ENCODE measurements at regions of chrX and their contacts with region 1.

Region 1: DNA sequence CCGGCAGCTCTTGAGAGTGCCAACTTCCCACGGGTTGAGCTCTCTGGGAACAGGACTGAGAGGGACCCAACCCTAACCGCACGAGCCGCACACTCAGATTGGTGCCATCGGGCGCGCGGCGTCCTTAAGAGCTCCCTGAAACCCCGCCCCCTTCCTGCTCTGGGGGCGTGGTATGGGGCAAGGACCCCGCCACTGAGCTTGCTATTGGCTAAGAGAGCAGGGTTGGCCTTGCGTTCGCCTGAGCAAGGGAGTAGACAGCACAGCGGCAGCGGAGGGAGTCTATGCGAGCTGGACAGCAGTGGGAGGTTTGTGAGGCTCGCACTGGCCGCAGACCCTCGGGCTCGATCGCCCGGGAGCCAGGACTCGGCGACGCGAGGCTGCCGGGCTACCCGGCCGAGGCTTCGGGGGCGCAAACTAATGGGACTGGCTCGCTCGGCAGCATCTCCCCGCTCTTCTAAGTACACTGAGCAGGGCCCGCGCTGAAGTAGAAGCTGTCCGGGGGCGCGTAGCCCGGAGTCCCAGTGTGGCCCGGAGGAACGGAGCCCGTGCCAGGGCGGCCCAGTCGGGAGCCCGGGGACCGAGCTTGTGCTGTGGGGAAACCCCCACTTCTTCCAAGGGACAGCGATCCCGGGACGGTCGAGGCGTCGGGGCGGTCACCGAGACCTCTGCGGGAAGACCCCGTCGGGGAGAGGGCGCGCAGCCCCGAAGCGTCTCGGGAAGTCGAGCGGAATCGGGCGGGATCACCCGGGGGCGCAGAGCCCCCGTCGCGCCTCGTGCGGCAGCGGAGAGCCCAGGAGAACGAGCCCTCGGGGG is at the start of gene EFNB1:
- DNase-seq: peak; percentile 86
- CTCF ChIP-seq: no peak

Region 2: DNA sequence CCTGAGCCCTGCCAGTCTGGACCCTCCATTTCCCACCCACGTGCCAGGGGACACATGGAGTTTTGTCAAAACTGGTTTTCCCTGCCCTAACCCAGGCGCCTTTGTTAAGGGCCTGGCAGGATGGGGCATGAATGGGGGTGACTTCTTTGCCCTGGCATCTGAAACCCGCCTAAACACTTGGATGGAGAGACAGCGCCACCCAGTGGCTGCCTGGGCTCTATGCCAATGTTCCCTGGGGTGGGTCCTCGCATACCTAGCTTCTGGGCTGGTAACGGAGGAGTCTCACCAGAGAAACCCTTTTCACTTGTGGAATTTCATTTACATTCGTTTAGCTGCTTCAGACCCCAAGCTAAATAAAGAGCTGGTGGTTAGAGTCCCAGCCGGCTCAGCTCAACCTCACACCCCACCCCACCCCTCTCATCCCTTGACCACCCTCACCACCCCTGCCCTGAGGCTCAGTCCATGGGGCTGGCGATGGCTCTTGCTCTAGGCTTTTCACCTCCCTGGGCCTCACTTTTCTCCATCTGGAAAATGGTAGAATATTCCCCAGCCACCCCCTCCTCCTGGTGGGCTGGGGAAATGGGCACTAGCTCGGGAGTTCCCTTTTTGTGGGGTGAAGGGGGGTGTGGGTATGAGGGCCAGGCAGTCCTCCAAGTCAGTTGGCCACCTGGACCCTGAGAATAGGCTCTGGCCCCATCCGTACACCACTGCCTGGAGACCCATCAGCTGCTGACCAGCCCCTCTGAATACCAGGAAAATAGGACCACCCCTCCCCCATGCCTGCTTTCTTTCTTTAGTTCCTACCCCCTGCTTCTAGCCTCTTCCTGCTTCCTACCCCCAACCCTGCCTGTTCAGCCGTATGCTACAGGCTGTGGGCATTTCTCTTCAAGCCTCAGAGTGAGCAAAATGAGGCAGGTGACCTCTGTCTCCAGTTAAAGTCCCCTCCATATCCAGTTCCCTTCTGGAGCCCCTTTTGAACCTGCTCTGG is 393.5 kb after region 1 on chrX:
- in situ Hi-C with region 1: loop called (anchors 10 kb)
- DNase-seq: peak; percentile 78
- CTCF ChIP-seq: peak; percentile 64

Region 3: DNA sequence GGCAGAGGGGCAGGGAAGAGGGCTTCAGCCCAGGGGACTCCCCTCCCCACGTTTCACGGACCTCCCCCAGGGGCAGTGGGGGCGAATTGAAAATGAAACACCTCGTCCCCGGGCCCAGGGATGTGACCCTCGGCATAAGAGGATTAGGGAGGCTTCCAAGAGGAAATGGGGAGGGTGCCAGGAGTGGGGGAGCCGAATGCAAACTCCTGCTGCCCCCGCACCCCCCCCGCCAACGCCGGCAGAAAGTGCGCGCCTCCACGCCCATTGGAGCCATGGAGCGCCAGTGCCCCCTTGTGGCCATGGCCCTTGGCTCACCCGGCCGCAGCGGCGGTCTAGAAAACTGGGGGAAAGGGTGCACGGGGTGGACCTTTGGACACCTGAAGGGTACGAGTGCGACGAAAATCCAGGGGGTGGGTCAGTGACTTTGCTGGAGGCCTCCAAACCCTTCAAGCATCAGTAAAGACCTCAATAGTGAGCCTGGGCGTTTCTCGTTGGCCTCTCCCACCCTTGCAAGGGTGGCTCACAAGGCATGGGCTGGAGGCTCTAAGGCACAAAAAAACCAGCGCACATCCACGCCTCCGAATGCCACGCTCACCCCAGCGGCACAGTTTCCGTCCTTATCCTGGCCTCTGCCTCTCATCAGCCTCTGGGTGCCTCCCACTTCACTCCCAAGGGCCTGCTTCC is 457.1 kb after region 1 on chrX:
- in situ Hi-C with region 1: loop called (anchors 10 kb)
- DNase-seq: peak; percentile 81
- CTCF ChIP-seq: peak; percentile 78

Measured in GM13976 (cell line).